Activated naive CD4-positive, alpha-beta T cell treated with anti-CD3 and anti-CD28 coated beads for 36 hours (primary cell): ENCODE measurements at regions of chr10 and their contacts with region 1.

Region 1: DNA sequence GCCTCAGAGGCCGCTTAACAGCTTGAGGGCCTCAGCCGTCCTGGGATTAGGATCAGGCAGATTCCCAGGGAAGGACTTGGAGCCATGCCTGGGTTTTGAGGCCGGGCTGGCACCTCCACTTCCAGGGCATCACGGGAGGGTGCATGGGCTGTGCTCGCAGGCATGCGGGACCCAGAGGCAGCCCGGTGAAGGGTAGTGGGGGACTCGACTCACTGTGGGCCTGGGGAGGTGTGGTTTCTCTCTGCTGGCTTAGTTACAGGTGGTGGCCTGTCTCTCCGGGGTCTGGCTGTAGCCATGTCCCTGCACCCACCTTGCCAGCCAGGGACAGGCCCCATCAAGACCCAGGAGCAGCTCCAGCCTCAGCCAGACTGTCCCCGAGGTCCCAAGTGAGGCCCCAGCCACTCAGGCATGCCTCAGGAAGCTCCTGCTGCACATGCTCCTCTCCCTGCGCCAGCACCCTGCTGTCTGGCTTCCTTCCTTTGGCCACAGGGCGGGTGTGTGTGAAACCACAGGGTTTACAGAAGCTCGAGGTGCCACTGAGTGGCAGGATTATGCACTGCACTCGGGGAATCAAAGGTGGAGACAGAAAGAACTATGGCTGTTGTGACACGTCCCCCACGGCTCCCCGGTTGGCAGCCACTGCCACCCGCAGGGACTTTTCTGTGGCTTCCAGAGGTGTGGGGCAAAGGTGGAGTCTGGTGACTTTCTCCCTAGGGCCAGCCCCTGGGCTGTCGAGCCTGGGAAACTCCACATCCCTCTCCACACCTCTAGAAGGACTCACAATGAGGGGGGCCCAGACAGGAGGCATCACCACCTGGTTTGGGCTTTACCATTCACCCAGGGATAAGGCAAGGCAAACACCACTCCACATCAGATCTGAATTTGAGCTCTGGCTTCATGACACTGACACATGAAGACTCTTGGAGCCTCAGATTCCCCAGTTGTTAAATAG is 19.7 kb downstream of the GOLGA7B start:
- DNase-seq: peak; percentile 95
- H3K4me3 Mint-ChIP-seq: peak overlapping the region; percentile 27
- H3K27ac Mint-ChIP-seq: no peak overlapping the region
- H3K4me1 Mint-ChIP-seq: peaks cover 11% of the 10 kb centered on the region
- H3K27me3 Mint-ChIP-seq: no peaks in the 10 kb centered on the region

Region 2: DNA sequence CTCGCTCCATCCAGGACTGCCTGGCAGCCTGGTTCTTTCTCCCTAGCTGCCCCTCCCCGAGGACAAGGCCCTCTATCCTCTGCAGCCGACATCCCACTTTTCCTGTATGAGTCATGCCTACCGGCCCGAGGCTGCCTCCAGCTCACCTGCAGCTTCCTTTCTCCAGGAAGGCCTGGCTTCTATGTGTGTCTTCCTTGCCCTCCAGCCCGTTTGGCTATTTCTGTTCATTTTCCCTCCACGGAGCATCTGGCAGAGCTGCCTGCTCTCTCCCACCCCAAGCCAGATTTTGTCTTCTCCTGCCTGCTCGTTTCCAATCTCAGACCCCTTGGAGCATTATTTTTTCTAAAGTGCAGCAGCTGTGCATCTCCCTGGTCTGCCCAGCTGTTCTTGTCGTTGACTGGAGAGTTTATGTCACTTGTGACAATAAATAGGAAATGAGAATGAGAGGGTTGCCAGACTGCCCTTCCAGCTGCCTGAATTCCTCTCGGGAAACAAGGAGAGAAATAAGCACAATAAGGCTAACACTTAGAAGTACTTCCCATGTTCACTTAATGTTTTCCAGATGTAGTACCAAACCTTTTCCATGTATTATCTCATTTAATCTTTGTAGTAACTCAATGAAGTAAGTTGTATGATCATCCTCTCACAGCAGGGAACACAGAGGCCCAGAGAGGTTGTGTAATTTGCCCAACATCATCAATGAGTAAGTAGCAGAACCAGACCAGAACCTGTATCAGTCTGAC is 350.9 kb before region 1 on chr10:
- CTCF ChIA-PET with region 1: no interaction called
- intact Hi-C with region 1: no loop called
- DNase-seq: no peak
- H3K4me3 Mint-ChIP-seq: no peak overlapping the region
- H3K27ac Mint-ChIP-seq: no peak overlapping the region
- H3K4me1 Mint-ChIP-seq: no peaks in the 10 kb centered on the region
- H3K27me3 Mint-ChIP-seq: no peaks in the 10 kb centered on the region

Region 3: GRCh38 chr10:97676770-97677581 is 192.4 kb before region 1 on chr10:
- CTCF ChIA-PET with region 1: interaction called, 6 read pairs
- intact Hi-C with region 1: loop called (anchors 1 kb)
- DNase-seq: peak; percentile 48
- H3K4me3 Mint-ChIP-seq: no peak overlapping the region
- H3K27ac Mint-ChIP-seq: no peak overlapping the region
- H3K4me1 Mint-ChIP-seq: no peaks in the 10 kb centered on the region
- H3K27me3 Mint-ChIP-seq: no peaks in the 10 kb centered on the region

Region 4: DNA sequence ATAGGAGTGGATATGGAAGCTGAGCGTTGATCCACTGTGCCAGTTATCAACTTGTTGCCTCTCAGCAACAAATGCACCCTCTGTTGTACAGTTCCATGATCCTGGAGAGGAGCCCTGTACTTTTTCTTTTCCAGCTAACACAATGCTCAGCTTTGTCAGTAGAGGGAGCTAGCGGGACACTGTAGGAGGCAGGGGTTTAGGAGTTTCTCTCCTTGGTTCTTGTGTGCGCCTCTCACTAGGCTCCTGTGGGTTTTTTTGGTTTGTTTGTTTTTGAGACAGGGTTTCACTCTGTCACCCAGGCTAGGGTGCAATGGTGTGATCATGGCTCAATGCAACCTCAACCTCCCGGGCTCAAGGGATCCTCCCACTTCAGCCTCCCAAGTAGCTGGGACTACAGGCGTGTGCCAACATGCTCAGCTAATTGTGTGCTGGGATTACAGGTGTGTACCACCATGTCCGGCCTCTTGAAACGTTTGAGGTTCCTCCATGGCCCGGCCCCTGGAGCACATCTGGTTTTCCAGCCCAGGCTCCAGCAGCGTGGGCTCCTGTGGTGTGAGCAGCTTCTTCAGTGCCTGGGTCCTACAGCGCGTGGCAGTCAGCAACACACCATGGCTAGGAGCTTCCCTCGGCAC is 167.8 kb before region 1 on chr10:
- CTCF ChIA-PET with region 1: interaction called, 4 read pairs
- intact Hi-C with region 1: loop called (anchors 2 kb)
- DNase-seq: peak; percentile 67
- H3K4me3 Mint-ChIP-seq: no peak overlapping the region
- H3K27ac Mint-ChIP-seq: no peak overlapping the region
- H3K4me1 Mint-ChIP-seq: no peaks in the 10 kb centered on the region
- H3K27me3 Mint-ChIP-seq: peaks cover 1% of the 10 kb centered on the region

Region 5: GRCh38 chr10:97759158-97759887 is 110.0 kb before region 1 on chr10:
- CTCF ChIA-PET with region 1: interaction called, 14 read pairs
- intact Hi-C with region 1: loop called (anchors 1 kb)
- DNase-seq: peak; percentile 69
- H3K4me3 Mint-ChIP-seq: no peak overlapping the region
- H3K27ac Mint-ChIP-seq: no peak overlapping the region
- H3K4me1 Mint-ChIP-seq: no peaks in the 10 kb centered on the region
- H3K27me3 Mint-ChIP-seq: no peaks in the 10 kb centered on the region

Region 6: GRCh38 chr10:97792141-97792721 is 77.1 kb before region 1 on chr10:
- CTCF ChIA-PET with region 1: interaction called, 232 read pairs
- intact Hi-C with region 1: loop called (anchors 1 kb)
- DNase-seq: peak; percentile 86
- H3K4me3 Mint-ChIP-seq: no peak overlapping the region
- H3K27ac Mint-ChIP-seq: no peak overlapping the region
- H3K4me1 Mint-ChIP-seq: peaks cover 28% of the 10 kb centered on the region
- H3K27me3 Mint-ChIP-seq: no peaks in the 10 kb centered on the region

Region 7: GRCh38 chr10:97849687-97850402 is 19.5 kb before region 1 on chr10 and contains the start of gene GOLGA7B:
- CTCF ChIA-PET with region 1: interaction called, 11 read pairs
- intact Hi-C with region 1: loop called (anchors 1 kb)
- DNase-seq: peak; percentile 62
- H3K4me3 Mint-ChIP-seq: peak within 1 kb of the TSS; percentile 77
- H3K27ac Mint-ChIP-seq: no peak within 1 kb of the TSS
- H3K4me1 Mint-ChIP-seq: peaks cover 34% of the 10 kb centered on the region
- H3K27me3 Mint-ChIP-seq: no peaks in the 10 kb centered on the region
- total RNA-seq, gene GOLGA7B: 0.25 to 0.31 TPM